ENCODE measurements at regions of chr14 and their contacts with region 1.

Region 1: DNA sequence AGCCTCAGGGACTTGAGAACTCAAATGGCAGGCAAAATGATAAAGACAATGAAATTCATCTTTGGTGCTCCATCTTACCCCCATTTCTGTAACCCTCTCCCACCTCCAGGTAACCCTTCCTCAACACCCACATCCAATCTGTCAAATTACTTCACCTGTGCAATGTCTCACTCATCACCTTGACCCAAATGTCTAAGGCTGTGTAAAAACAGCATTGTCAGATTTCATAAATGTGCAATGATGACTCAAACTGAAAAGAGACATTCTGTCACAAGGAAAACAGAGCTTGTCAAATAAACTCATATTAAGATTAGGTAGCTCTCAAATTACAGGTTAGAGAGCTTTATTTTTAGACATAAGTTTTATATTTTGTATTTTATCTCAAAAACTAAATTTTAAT is 19.9 kb upstream of the COCH start:
- DNase-seq: no peak
- ATAC-seq: no peak
- H3K4me3 ChIP-seq: no peak overlapping the region
- H3K4me3 Mint-ChIP-seq: no peak overlapping the region
- H3K27ac ChIP-seq: no peak overlapping the region
- H3K27ac Mint-ChIP-seq: no peak overlapping the region
- H3K4me1 ChIP-seq: peaks cover 2 to 23% of the 10 kb centered on the region in 2 donors
- H3K4me1 Mint-ChIP-seq: peaks cover 25% of the 10 kb centered on the region
- H3K27me3 ChIP-seq: peaks cover 0 to under 1% (median 0%) of the 10 kb centered on the region in 4 experiments
- H3K27me3 Mint-ChIP-seq: peaks cover 4% of the 10 kb centered on the region
- CTCF ChIP-seq: no peak

Region 2: GRCh38 chr14:30864934-30865333 is 10.4 kb after region 1 on chr14:
- CTCF ChIA-PET with region 1: interaction called, 3 read pairs
- POLR2A ChIA-PET with region 1: interaction called, 10 read pairs
- intact Hi-C with region 1: no loop called
- DNase-seq: no peak
- ATAC-seq: no peak
- H3K4me3 ChIP-seq: no peak overlapping the region
- H3K4me3 Mint-ChIP-seq: no peak overlapping the region
- H3K27ac ChIP-seq: no peak overlapping the region
- H3K27ac Mint-ChIP-seq: no peak overlapping the region
- H3K4me1 ChIP-seq: peaks cover 13% of the 10 kb centered on the region in 2 donors
- H3K4me1 Mint-ChIP-seq: peaks cover 18% of the 10 kb centered on the region
- H3K27me3 ChIP-seq: no peaks in the 10 kb centered on the region
- H3K27me3 Mint-ChIP-seq: peaks cover 4% of the 10 kb centered on the region
- CTCF ChIP-seq: no peak